Activated naive CD4-positive, alpha-beta T cell treated with anti-CD3 and anti-CD28 coated beads for 36 hours (primary cell): ENCODE measurements at regions of chr12 and their contacts with region 1.

Region 1: GRCh38 chr12:70733385-70733784 is 96.2 kb upstream of the PTPRB start:
- DNase-seq: peak; percentile 16
- H3K4me3 Mint-ChIP-seq: no peak overlapping the region
- H3K27ac Mint-ChIP-seq: no peak overlapping the region
- H3K4me1 Mint-ChIP-seq: no peaks in the 10 kb centered on the region
- H3K27me3 Mint-ChIP-seq: peaks cover 4% of the 10 kb centered on the region

Region 2: DNA sequence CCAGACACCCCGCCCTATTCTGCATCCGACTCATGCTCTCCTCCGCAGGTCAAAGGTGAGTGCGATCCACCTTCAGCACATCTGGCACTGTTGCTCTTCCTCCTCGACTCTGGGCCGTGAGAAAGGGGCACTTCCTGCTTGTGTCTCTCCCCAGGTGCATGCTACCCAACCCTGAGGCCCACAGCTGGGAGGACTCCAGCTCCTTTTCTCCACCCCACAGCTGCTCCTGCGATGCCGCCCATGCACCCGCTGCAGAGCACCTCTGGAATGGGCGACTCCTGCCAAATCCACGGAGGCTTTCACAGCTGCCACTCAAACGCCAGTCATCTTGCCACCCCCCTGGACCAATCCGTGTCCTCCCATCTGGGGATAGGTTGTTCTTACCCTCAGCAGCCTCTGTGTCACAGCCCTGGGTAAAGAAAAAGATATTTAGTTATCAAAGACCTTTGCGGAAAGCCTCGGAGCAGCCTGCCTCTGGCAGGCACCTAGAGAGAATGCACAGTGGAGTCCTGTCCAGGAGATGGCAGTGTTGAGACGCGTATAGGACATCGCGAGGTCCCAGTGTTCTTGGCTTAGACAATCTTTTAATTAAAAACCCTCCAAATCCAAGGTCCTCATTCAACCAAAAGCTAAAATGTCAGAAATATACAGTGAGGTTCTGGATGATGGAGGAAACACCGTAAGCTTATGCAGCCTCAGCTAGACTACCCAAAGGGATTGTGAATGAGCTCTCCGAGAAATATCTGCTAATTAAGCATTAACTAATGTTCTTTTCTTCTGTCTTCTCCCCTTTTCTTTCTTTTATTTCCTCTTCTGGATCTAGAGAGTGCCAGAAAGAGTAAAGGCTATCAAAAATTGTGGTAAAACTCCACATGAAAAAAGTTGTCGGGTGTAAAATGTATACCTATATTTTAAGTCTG is 854.1 kb before region 1 on chr12:
- CTCF ChIA-PET with region 1: interaction called, 20 read pairs
- intact Hi-C with region 1: loop called (anchors 1 kb)
- DNase-seq: peak; percentile 83
- H3K4me3 Mint-ChIP-seq: no peak overlapping the region
- H3K27ac Mint-ChIP-seq: no peak overlapping the region
- H3K4me1 Mint-ChIP-seq: peaks cover 4% of the 10 kb centered on the region
- H3K27me3 Mint-ChIP-seq: peaks cover 11% of the 10 kb centered on the region

Region 3: GRCh38 chr12:69900720-69901131 is 832.7 kb before region 1 on chr12:
- CTCF ChIA-PET with region 1: interaction called, 6 read pairs
- intact Hi-C with region 1: loop called (anchors 2 kb)
- DNase-seq: peak; percentile 81
- H3K4me3 Mint-ChIP-seq: no peak overlapping the region
- H3K27ac Mint-ChIP-seq: no peak overlapping the region
- H3K4me1 Mint-ChIP-seq: no peaks in the 10 kb centered on the region
- H3K27me3 Mint-ChIP-seq: no peaks in the 10 kb centered on the region

Region 4: DNA sequence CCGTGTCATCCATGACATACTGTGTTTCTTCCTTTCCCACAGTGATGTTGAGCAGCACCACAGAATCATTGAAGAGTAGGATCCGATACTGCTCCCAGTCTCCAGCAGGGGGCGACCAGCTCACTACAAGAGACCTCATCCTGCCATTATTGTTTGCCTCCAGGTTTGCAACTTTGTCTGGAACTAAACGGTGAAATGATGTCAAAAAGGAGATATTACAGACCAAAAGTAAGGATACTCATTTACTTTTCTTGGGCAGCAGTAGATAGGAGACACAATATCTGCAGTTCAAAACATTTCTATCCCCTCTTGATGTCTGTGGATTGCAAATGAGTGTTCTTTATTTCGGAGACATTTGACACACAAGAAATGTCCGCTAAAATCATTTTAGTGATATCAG is 143.3 kb before region 1 on chr12:
- CTCF ChIA-PET with region 1: no interaction called
- intact Hi-C with region 1: loop called (anchors 1 kb)
- DNase-seq: peak; percentile 72
- H3K4me3 Mint-ChIP-seq: no peak overlapping the region
- H3K27ac Mint-ChIP-seq: no peak overlapping the region
- H3K4me1 Mint-ChIP-seq: no peaks in the 10 kb centered on the region
- H3K27me3 Mint-ChIP-seq: peaks cover 31% of the 10 kb centered on the region

Region 5: DNA sequence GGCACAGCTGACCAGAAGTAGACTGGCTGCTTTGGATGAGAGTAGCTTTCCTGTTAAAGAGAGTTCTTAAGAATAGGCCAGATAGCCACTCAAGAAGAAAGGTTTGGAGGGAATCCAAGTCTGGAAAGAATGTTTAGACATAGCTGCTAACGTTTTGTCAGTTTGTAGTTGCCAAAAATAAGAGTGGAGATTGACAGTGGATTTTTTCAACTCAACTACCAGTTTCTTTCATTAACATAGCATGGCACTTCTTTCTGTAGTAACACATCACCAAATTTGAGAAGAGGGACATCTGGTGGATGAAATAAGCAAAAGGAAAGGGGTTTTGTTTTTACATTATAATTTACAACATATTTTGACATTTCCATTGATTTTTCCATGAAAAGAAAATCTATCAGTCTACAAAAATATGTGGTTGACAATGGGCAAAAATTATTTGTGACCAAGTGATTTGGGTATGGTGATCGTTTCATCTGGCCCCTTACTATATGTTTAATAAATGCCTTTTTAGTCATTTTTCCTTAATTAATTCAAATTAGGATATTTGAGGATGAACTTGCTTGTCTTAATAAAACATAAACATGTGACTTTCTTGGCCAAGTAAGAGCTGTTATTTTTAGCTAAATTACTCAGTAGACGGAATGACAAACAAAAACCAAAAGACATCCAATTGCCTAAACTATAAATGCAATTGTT is 116.0 kb after region 1 on chr12:
- CTCF ChIA-PET with region 1: interaction called, 5 read pairs
- intact Hi-C with region 1: loop called (anchors 1 kb)
- DNase-seq: no peak
- H3K4me3 Mint-ChIP-seq: no peak overlapping the region
- H3K27ac Mint-ChIP-seq: no peak overlapping the region
- H3K4me1 Mint-ChIP-seq: no peaks in the 10 kb centered on the region
- H3K27me3 Mint-ChIP-seq: peaks cover 3% of the 10 kb centered on the region

Region 6: DNA sequence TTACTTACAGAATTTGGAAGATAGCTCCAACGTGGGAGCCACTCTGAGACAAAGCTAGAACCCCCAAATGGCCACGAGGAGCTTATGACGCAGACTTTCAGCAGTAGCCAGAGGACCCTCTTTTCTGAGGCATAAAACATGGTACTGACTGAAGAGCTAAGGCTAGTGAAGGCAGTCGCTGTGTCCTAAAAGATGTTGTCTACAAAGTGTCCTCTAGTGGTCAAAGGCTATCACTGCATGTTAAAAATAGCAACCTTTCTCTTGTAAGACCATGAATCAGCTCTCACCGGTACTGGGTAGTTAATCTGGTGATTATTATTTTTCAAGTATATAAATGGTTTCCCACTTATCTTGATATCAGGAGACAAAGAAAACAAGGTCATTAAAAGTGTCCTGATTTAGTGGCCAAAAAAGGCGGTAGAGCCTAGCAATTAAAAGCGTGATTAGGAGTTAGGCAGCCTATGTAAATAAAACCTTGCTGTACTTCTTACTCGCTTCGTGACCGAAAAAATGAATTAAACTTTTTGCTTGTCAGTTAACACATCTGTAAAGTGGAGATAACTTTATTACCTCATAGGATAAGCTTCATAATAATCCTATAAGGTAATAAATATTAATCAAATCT is 659.2 kb after region 1 on chr12:
- CTCF ChIA-PET with region 1: no interaction called
- intact Hi-C with region 1: loop called (anchors 1 kb)
- DNase-seq: no peak
- H3K4me3 Mint-ChIP-seq: no peak overlapping the region
- H3K27ac Mint-ChIP-seq: no peak overlapping the region
- H3K4me1 Mint-ChIP-seq: no peaks in the 10 kb centered on the region
- H3K27me3 Mint-ChIP-seq: peaks cover 12% of the 10 kb centered on the region